Mammary epithelial cell (primary cell): ENCODE measurements at regions of chr16 and their contacts with region 1.

Region 1: GRCh38 chr16:352547-353403 is at the start of gene AXIN1:
- DNase-seq: peak; percentile 97
- H3K4me3 ChIP-seq: peak within 1 kb of the TSS; percentile 68 to 86 (median 70)
- H3K27ac ChIP-seq: peak within 1 kb of the TSS; percentile 62
- H3K4me1 ChIP-seq: peaks cover 25% of the 10 kb centered on the region
- H3K27me3 ChIP-seq: no peaks in the 10 kb centered on the region
- CTCF ChIP-seq: peak; percentile 5 to 40
- total RNA-seq, gene AXIN1: 21.7 to 31.2 TPM

Region 2: GRCh38 chr16:138049-138417 is 214.7 kb before region 1 on chr16:
- CTCF ChIA-PET with region 1: interaction called, 21 read pairs
- dilution Hi-C with region 1: no loop called
- in situ Hi-C with region 1: no loop called
- intact Hi-C with region 1: no loop called
- DNase-seq: no peak
- H3K4me3 ChIP-seq: peak overlapping the region; percentile 83 to 100 (median 89)
- H3K27ac ChIP-seq: no peak overlapping the region
- H3K4me1 ChIP-seq: peaks cover 6% of the 10 kb centered on the region
- H3K27me3 ChIP-seq: no peaks in the 10 kb centered on the region
- CTCF ChIP-seq: no peak

Region 3: GRCh38 chr16:212999-213398 is 139.8 kb before region 1 on chr16:
- CTCF ChIA-PET with region 1: interaction called, 5 read pairs
- dilution Hi-C with region 1: no loop called
- in situ Hi-C with region 1: loop called in 1 of 2 experiments (anchors 10 kb)
- intact Hi-C with region 1: no loop called
- DNase-seq: no peak
- H3K4me3 ChIP-seq: no peak overlapping the region
- H3K27ac ChIP-seq: no peak overlapping the region
- H3K4me1 ChIP-seq: peaks cover 4% of the 10 kb centered on the region
- H3K27me3 ChIP-seq: no peaks in the 10 kb centered on the region
- CTCF ChIP-seq: no peak

Region 4: DNA sequence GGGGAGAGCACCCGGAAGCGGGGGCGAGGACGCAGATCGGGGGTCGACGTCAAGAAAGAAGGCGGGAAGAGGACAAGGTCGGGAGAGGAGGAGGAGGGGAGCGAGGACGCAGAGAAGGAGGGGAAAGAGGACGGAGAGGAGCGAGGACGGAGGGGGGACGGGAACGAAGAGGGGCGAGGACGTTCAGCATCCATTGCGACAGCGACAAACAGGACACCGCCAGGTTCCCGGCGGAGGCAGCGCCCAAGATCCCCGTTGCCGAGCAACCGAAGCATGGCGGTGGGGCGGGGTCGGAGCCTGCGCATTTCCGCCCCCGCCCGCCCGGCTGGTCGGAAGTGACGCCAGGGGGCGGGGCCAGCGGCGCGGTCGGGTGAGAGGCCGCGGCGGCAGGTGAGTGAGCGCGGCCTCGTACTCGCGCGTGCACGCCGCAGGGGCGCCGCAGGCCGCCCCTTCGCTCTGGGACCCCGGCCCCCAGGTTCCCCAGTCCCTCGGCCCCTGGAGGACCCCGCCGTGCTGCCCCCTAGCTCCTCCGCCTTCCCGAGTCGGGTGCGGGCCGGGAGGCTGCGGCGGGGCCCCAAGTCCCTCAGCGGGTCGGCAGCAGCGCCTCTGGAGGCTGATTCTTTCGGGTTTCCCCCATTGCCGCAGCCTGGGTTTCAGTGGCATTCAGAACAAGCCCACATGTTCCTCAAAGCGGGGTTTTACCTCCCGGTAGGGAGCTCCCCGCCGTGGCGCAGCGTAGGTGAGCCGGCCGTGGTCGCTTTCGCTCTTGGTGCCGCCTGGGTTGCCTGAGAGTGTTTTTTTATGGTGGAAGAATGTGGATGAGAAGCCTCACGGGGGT is 118.1 kb before region 1 on chr16 and contains the start of gene FAM234A:
- CTCF ChIA-PET with region 1: interaction called, 3 read pairs
- dilution Hi-C with region 1: no loop called
- in situ Hi-C with region 1: no loop called
- intact Hi-C with region 1: loop called (anchors 1 kb)
- DNase-seq: peak; percentile 90
- H3K4me3 ChIP-seq: peak within 1 kb of the TSS; percentile 77 to 79 (median 78)
- H3K27ac ChIP-seq: peak within 1 kb of the TSS; percentile 97
- H3K4me1 ChIP-seq: no peaks in the 10 kb centered on the region
- H3K27me3 ChIP-seq: no peaks in the 10 kb centered on the region
- CTCF ChIP-seq: peak; percentile 35 to 58
- total RNA-seq, gene FAM234A: 58.4 to 76.3 TPM

Region 5: DNA sequence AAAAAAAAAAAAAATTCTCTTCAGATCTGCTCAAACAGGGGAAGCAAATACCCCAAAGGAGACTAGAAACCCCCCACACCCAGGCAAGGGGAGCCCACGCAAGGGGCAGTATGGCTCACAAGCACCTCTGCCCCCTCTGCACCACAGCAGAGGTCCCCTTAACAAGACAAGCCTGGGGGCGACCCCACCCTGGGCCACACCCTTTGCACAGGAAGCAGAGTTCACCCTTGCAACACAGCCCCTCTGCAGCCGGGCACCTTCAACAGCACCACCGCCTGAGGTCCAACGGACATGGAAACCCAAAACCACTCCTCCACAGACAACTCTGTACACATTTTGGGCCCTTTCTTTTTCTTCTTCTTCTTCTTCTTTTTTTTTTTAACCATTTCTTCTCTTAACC is 13.1 kb before region 1 on chr16:
- CTCF ChIA-PET with region 1: interaction called, 15 read pairs
- dilution Hi-C with region 1: no loop called
- in situ Hi-C with region 1: no loop called
- intact Hi-C with region 1: no loop called
- DNase-seq: no peak
- H3K4me3 ChIP-seq: no peak overlapping the region
- H3K27ac ChIP-seq: no peak overlapping the region
- H3K4me1 ChIP-seq: peaks cover 3% of the 10 kb centered on the region
- H3K27me3 ChIP-seq: no peaks in the 10 kb centered on the region
- CTCF ChIP-seq: no peak